K562 (cell line): ENCODE measurements at regions of chr22 and their contacts with region 1.

Region 1: GRCh38 chr22:22818861-22819855 is 68.5 kb upstream of the IGLL5 start:
- DNase-seq: no peak
- ATAC-seq: peak; percentile 9
- H3K4me3 ChIP-seq: no peak overlapping the region
- H3K27ac ChIP-seq: no peak overlapping the region
- H3K4me1 ChIP-seq: no peaks in the 10 kb centered on the region
- H3K27me3 ChIP-seq: peaks cover 15 to 54% of the 10 kb centered on the region in 2 experiments; a peak in 4 of 5 replicates
- CTCF ChIP-seq: no peak
- EP300 ChIP-seq: no peak
- POLR2A ChIP-seq: no peak
- RAD21 ChIP-seq: no peak

Region 2: DNA sequence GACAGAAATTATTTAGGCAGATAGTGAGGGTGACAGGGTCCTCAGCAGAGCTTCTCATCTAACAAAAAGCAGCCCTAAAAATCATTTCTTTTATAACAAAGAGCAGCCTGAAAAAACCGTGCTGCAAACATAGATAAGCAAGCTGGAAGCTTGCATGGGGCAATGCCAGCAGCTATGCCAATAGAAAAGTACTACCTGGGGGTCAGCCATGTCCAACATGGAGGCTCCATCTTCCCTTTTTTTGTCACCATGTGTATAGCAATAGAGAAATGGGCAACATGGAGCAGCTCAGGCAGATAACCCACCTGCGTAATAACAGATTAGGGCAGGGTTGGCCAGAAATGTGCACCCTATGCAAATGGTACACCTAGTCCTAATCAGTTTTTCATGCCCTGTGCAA is 11.0 kb after region 1 on chr22:
- CTCF ChIA-PET with region 1: interaction called, 3 read pairs
- POLR2A ChIA-PET with region 1: interaction called, 41 read pairs
- in situ Hi-C with region 1: no loop called
- intact Hi-C with region 1: no loop called
- DNase-seq: no peak
- ATAC-seq: no peak
- H3K4me3 ChIP-seq: no peak overlapping the region
- H3K27ac ChIP-seq: no peak overlapping the region
- H3K4me1 ChIP-seq: no peaks in the 10 kb centered on the region
- H3K27me3 ChIP-seq: peaks cover 21 to 36% of the 10 kb centered on the region in 2 experiments
- CTCF ChIP-seq: no peak
- EP300 ChIP-seq: no peak
- POLR2A ChIP-seq: no peak
- RAD21 ChIP-seq: no peak

Region 3: DNA sequence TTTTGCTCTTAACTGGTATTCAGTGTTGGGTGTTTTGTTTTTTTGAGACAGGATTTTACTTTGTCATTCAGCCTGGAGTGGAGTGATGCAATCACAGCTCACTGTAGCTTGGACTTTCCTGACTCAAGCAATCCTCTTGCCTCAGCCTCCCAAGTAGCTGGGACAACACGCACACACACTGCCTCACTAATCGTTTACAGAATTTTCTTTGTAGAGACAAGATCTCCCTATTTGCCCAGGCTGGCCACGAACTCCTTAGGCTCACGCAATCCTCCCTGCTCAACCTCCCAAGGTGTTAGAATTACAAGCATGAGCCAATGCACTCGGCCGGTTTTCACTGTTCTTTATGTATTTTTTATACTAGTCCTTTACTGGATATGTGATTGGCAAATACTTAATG is 17.5 kb after region 1 on chr22:
- CTCF ChIA-PET with region 1: interaction called, 4 read pairs
- POLR2A ChIA-PET with region 1: interaction called, 29 read pairs
- in situ Hi-C with region 1: no loop called
- intact Hi-C with region 1: no loop called
- DNase-seq: peak in 1 of 4 experiments; percentile 53
- ATAC-seq: peak; percentile 71
- H3K4me3 ChIP-seq: no peak overlapping the region
- H3K27ac ChIP-seq: no peak overlapping the region
- H3K4me1 ChIP-seq: peaks cover 0 to 7% of the 10 kb centered on the region in 2 experiments; a peak in 1 of 5 replicates
- H3K27me3 ChIP-seq: peaks cover 25 to 33% of the 10 kb centered on the region in 2 experiments
- CTCF ChIP-seq: no peak
- EP300 ChIP-seq: no peak
- POLR2A ChIP-seq: no peak
- RAD21 ChIP-seq: no peak